Heart right ventricle (tissue), 16 donors: ENCODE measurements at regions of chr2 and their contacts with region 1.

Region 1: DNA sequence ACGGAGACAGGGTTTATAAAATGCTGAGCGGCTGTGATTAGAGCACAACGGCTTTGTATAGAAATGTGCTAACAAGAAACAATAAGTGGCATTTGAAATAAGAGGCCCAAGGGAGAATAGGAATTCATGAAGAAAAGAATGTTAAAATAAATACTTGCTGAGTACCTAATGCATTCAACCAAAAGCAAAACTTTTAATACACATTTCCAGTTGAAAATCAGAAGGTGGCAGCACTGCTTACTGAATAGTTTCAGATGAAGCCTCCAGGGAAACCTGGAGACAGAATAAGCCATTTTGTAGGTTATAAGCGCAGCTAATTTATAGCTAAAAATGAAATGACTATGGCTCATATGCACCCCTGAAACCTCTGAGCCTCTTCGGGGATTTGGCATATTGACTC is 286.6 kb downstream of the DPP10 start:
- DNase-seq: no peak
- ATAC-seq: no peak
- H3K4me3 ChIP-seq: no peak overlapping the region
- H3K27ac ChIP-seq: no peak overlapping the region
- H3K4me1 ChIP-seq: no peaks in the 10 kb centered on the region
- H3K27me3 ChIP-seq: peaks cover 0 to 5% (median 0%) of the 10 kb centered on the region in 7 donors
- CTCF ChIP-seq: peak in 7 of 9 donors; percentile 31 to 56 (median 35)

Region 2: GRCh38 chr2:115011721-115012120 is 282.7 kb after region 1 on chr2:
- intact Hi-C with region 1: no loop called
- DNase-seq: no peak
- ATAC-seq: no peak
- H3K4me3 ChIP-seq: no peak overlapping the region
- H3K27ac ChIP-seq: no peak overlapping the region
- H3K4me1 ChIP-seq: no peaks in the 10 kb centered on the region
- H3K27me3 ChIP-seq: no peaks in the 10 kb centered on the region
- CTCF ChIP-seq: no peak

Region 3: GRCh38 chr2:115083225-115083624 is 354.2 kb after region 1 on chr2:
- intact Hi-C with region 1: loop called in 4 of 10 experiments (anchors 5 to 10 kb)
- DNase-seq: no peak
- ATAC-seq: no peak
- H3K4me3 ChIP-seq: no peak overlapping the region
- H3K27ac ChIP-seq: no peak overlapping the region
- H3K4me1 ChIP-seq: no peaks in the 10 kb centered on the region
- H3K27me3 ChIP-seq: peaks cover 0 to 4% (median 0%) of the 10 kb centered on the region in 7 donors
- CTCF ChIP-seq: peak in 1 of 9 donors; percentile 9